ENCODE measurements at regions of chr3 and their contacts with region 1.

Region 1: DNA sequence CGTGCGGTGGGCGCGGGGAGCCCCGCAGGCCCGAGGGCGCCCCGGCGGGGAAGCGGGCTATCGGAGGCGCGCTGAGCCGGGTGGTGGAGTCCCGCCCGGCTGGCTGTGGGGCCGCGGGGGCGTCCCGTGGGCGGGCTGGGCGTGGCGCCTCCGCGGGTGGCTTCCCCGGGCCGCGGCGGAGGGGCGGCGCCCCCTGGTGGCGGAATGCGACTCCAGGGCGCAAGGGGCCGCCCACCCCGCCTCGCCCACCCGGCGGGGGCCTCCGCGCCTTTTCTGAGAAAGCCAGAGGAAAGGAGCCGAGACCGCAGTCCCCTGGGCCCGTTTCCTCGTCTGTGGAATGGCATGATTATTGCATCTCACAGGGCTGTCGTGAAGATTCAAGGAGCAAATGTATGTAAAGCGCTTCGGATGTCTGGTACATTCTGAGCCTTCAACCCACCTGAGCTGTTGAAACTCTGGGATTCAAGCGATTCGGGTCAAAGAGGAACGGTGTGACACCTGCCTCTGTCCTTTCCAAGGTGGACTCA is 31.9 kb upstream of the RAB6B start:
- DNase-seq: peak; percentile 54 to 83 (median 64)
- ATAC-seq: peak in 3 of 4 donors; percentile 69 to 89 (median 78)
- H3K4me3 ChIP-seq: peak overlapping the region; percentile 30 to 74 (median 56)
- H3K27ac ChIP-seq: no peak overlapping the region
- H3K4me1 ChIP-seq: peaks cover 0 to 18% (median 8%) of the 10 kb centered on the region in 12 donors
- H3K27me3 ChIP-seq: peaks cover 0 to 3% (median 0%) of the 10 kb centered on the region in 9 donors
- CTCF ChIP-seq: peak; percentile 48 to 98 (median 80)
- POLR2A ChIP-seq: no peak

Region 2: GRCh38 chr3:132722164-132723024 is 1205.2 kb before region 1 on chr3 and contains the start of gene NPHP3:
- intact Hi-C with region 1: loop called in 1 of 10 experiments (anchors 10 kb)
- DNase-seq: peak; percentile 97 to 100 (median 99)
- ATAC-seq: peak; percentile 91 to 95 (median 92)
- H3K4me3 ChIP-seq: peak within 1 kb of the TSS; percentile 70 to 99 (median 86)
- H3K27ac ChIP-seq: peak within 1 kb of the TSS; percentile 91 to 99 (median 96)
- H3K4me1 ChIP-seq: peaks cover 0 to 46% (median 28%) of the 10 kb centered on the region in 12 donors
- H3K27me3 ChIP-seq: no peaks in the 10 kb centered on the region
- CTCF ChIP-seq: peak in 3 of 12 donors; percentile 9 to 23 (median 14)
- POLR2A ChIP-seq: peak; percentile 34 to 89
- total RNA-seq, gene NPHP3: 7.6 to 14.7 (median 10.9) TPM

Region 3: DNA sequence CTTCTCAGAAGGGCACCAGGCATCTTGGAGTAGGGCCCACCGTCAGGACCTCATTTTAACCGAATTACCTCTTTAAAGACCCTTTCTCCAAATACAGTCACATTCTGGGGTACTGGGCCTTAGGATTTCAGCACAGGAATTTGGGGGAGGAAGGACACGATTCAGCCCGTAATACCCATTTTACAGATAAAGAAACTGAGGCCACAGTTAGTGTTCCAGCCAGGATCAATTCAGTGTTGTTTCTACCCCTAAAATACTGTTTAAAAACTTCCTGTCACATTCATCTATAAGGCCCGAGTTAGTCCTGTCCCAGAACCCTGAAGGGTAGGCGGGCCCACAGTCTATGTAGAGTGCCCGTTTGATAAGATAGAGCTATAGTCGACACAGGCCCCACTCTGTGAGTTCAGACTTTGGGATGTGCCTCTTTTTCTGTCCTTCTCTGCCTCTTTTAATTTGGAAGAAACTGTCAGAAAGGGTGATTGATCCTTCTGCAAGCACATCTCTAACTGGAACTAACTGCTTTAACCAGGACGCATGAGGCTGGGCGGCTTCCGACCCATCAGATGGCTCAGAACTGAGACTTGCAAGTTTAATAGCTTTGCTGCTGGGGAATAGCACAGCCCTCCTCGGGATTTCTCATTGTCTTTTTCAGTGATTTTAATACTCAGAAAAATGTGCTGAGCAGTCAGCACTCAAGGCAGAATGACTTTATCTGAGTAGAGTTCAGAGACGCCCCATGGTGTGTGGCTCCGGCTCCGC is 508.3 kb before region 1 on chr3:
- intact Hi-C with region 1: no loop called
- DNase-seq: no peak
- ATAC-seq: no peak
- H3K4me3 ChIP-seq: no peak overlapping the region
- H3K27ac ChIP-seq: no peak overlapping the region
- H3K4me1 ChIP-seq: peaks cover 0 to 5% (median 0%) of the 10 kb centered on the region in 12 donors
- H3K27me3 ChIP-seq: peaks cover 0 to 17% (median 0%) of the 10 kb centered on the region in 9 donors
- CTCF ChIP-seq: no peak
- POLR2A ChIP-seq: no peak

Region 4: GRCh38 chr3:133669949-133670524 is 257.6 kb before region 1 on chr3:
- intact Hi-C with region 1: loop called in 5 of 10 experiments (anchors 5 to 10 kb)
- DNase-seq: no peak
- ATAC-seq: no peak
- H3K4me3 ChIP-seq: no peak overlapping the region
- H3K27ac ChIP-seq: no peak overlapping the region
- H3K4me1 ChIP-seq: peaks cover 0 to 13% (median 0%) of the 10 kb centered on the region in 12 donors
- H3K27me3 ChIP-seq: peaks cover 0 to 28% (median 12%) of the 10 kb centered on the region in 9 donors
- CTCF ChIP-seq: no peak
- POLR2A ChIP-seq: no peak

Region 5: DNA sequence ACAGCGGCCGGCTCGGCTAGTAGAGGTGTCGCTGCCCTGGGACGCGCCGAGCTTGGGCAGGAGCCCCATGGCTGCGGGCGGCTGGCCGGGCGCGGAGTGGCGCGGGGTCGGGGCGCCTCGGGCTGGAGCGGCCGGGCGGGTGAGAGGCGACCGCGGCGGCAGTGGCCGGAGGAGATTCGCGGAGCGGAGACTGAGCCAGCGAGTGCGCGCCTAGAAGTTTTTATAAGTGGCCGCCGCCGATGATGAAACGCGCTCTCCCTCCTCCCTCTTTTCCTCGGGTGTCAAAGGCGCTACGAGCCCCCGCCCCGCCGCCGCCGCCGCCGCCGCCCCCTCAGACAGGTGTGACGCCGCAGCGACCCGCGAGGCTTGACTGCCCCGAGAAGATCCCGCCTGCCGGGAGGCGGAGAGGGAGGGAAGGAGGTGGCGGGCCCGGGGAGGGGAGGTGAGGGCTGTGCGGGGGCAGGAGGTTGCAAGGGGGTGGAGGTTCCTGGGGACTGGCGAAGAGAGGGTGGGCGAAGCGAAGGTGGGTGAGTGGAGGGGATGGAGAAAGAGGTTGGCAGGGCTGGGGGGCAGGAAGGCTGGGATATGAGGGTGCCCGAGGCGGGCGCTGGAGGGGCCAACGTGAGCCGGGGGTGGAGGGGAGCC is 102.3 kb after region 1 on chr3 and contains the start of gene SLCO2A1:
- intact Hi-C with region 1: loop called in 2 of 10 experiments (anchors 5 to 10 kb)
- DNase-seq: peak in 3 of 5 donors; percentile 34 to 64 (median 51)
- ATAC-seq: peak in 3 of 4 donors; percentile 45 to 61 (median 56)
- H3K4me3 ChIP-seq: peak within 1 kb of the TSS; percentile 51 to 83 (median 59)
- H3K27ac ChIP-seq: peak within 1 kb of the TSS in 8 of 12 donors; percentile 1 to 73 (median 38)
- H3K4me1 ChIP-seq: peaks cover 0 to 20% (median 3%) of the 10 kb centered on the region in 12 donors
- H3K27me3 ChIP-seq: peaks cover 0 to 18% (median 9%) of the 10 kb centered on the region in 9 donors
- CTCF ChIP-seq: no peak
- POLR2A ChIP-seq: peak in 1 of 2 donors; percentile 11
- total RNA-seq, gene SLCO2A1: 2.8 to 28.4 (median 13.9) TPM

Region 6: DNA sequence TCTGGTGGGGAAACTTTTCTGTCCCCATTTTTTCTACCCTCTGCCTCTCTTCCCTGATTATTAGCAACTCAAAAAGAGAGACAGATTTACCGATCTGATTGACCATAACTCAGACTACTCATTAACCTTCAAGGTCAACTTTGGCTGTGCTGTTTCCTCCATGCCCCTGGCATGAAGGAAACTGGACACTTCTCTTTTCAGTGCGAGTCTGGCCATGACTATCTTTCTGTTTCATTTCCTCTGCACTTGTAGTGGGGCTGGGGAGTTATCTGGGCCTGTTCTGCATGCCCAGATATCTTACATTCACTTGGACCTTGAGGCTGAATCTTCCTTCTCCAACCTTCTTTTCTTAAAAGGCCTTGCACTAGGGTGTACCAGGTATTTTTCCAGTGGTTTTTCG is 179.0 kb after region 1 on chr3:
- intact Hi-C with region 1: no loop called
- DNase-seq: no peak
- ATAC-seq: no peak
- H3K4me3 ChIP-seq: no peak overlapping the region
- H3K27ac ChIP-seq: no peak overlapping the region
- H3K4me1 ChIP-seq: no peaks in the 10 kb centered on the region
- H3K27me3 ChIP-seq: no peaks in the 10 kb centered on the region
- CTCF ChIP-seq: no peak
- POLR2A ChIP-seq: no peak

Region 7: GRCh38 chr3:134197681-134198261 is 270.2 kb after region 1 on chr3:
- intact Hi-C with region 1: loop called in 3 of 10 experiments (anchors 5 to 10 kb)
- DNase-seq: no peak
- ATAC-seq: peak; percentile 52 to 82 (median 80)
- H3K4me3 ChIP-seq: no peak overlapping the region
- H3K27ac ChIP-seq: no peak overlapping the region
- H3K4me1 ChIP-seq: peaks cover 0 to 8% (median 0%) of the 10 kb centered on the region in 12 donors
- H3K27me3 ChIP-seq: no peaks in the 10 kb centered on the region
- CTCF ChIP-seq: peak; percentile 58 to 84 (median 71)
- POLR2A ChIP-seq: no peak

Region 8: GRCh38 chr3:134485718-134486576 is 558.3 kb after region 1 on chr3 and contains the starts of genes ANAPC13 and CEP63:
- intact Hi-C with region 1: loop called in 1 of 10 experiments (anchors 10 kb)
- DNase-seq: peak; percentile 93 to 96 (median 95)
- ATAC-seq: peak; percentile 92 to 96 (median 93)
- H3K4me3 ChIP-seq: peak within 1 kb of the TSS; percentile 61 to 96 (median 80)
- H3K27ac ChIP-seq: peak within 1 kb of the TSS; percentile 81 to 99 (median 96)
- H3K4me1 ChIP-seq: peaks cover 7 to 53% (median 34%) of the 10 kb centered on the region in 12 donors
- H3K27me3 ChIP-seq: no peaks in the 10 kb centered on the region
- CTCF ChIP-seq: no peak
- POLR2A ChIP-seq: no peak
- total RNA-seq, gene ANAPC13: 53.4 to 109 (median 81.3) TPM
- total RNA-seq, gene CEP63: 19.1 to 35.3 (median 30.3) TPM

Measured in heart left ventricle (tissue), 16 donors.